AG04449 (cell line): ENCODE measurements at regions of chr9 and their contacts with region 1.

Region 1: GRCh38 chr9:124040935-124041816 is 29.6 kb downstream of the LHX2 start:
- DNase-seq: no peak
- H3K4me3 ChIP-seq: peak overlapping the region; percentile 53
- CTCF ChIP-seq: peak; percentile 82

Region 2: GRCh38 chr9:123401879-123402513 is 639.2 kb before region 1 on chr9:
- CTCF ChIA-PET with region 1: interaction called, 23 read pairs
- POLR2A ChIA-PET with region 1: no interaction called
- DNase-seq: no peak
- H3K4me3 ChIP-seq: no peak overlapping the region
- CTCF ChIP-seq: peak; percentile 79

Region 3: GRCh38 chr9:123544007-123544827 is 497.0 kb before region 1 on chr9:
- CTCF ChIA-PET with region 1: interaction called, 111 read pairs
- POLR2A ChIA-PET with region 1: interaction called, 3 read pairs
- DNase-seq: no peak
- H3K4me3 ChIP-seq: no peak overlapping the region
- CTCF ChIP-seq: peak; percentile 71

Region 4: DNA sequence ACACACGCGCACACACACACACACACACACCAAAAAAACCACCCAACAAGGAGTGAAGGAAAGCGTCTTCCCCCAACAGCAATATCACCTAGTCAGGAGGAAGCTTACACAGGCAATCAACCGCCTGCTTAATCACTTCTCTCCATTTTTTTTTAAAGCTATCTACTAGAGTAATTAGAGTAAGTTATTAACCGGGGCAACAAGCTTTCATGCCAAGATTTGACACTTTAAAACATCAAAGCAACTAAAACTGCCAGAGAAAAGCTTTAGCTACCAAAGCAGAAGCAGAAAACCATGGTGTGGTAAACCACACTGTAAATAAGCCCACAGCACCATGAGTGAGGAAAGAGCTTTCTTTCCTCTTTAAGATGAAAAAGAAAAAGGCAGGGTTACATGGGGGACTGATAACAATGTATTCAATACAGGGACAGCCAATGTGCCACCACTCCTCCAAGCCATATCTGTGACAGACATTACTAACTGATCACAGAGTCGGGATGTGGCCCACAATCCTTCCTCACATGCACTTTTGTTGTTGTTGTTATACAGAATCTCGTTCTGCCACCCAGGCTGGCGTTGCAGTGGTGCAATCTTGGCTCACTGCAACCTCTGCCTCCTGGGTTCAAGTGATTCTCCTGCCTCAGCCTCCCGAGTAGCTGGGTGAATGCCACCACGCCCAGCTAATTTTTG is 403.1 kb before region 1 on chr9:
- CTCF ChIA-PET with region 1: interaction called, 10 read pairs
- POLR2A ChIA-PET with region 1: no interaction called
- DNase-seq: no peak
- H3K4me3 ChIP-seq: peak overlapping the region; percentile 29
- CTCF ChIP-seq: no peak

Region 5: GRCh38 chr9:123724211-123724796 is 316.9 kb before region 1 on chr9:
- CTCF ChIA-PET with region 1: interaction called, 83 read pairs
- POLR2A ChIA-PET with region 1: no interaction called
- DNase-seq: peak; percentile 10
- H3K4me3 ChIP-seq: no peak overlapping the region
- CTCF ChIP-seq: peak; percentile 34

Region 6: GRCh38 chr9:124030969-124031451 is 10.2 kb before region 1 on chr9:
- CTCF ChIA-PET with region 1: interaction called, 22 read pairs
- POLR2A ChIA-PET with region 1: no interaction called
- DNase-seq: peak; percentile 54
- H3K4me3 ChIP-seq: peak overlapping the region; percentile 38
- CTCF ChIP-seq: no peak

Region 7: GRCh38 chr9:124054582-124055227 is 13.5 kb after region 1 on chr9:
- CTCF ChIA-PET with region 1: interaction called, 122 read pairs
- POLR2A ChIA-PET with region 1: no interaction called
- DNase-seq: no peak
- H3K4me3 ChIP-seq: no peak overlapping the region
- CTCF ChIP-seq: no peak

Region 8: GRCh38 chr9:124180557-124180956 is 139.4 kb after region 1 on chr9:
- CTCF ChIA-PET with region 1: no interaction called
- POLR2A ChIA-PET with region 1: no interaction called
- DNase-seq: no peak
- H3K4me3 ChIP-seq: no peak overlapping the region
- CTCF ChIP-seq: no peak